GM10248 (cell line): ENCODE measurements at regions of chr3 and their contacts with region 1.

Region 1: GRCh38 chr3:29668728-29669127 is 387.9 kb downstream of the RBMS3 start:
- DNase-seq: no peak
- CTCF ChIP-seq: peak; percentile 9

Region 2: GRCh38 chr3:29679944-29680343 is 11.2 kb after region 1 on chr3:
- CTCF ChIA-PET with region 1: interaction called, 10 read pairs
- POLR2A ChIA-PET with region 1: no interaction called
- DNase-seq: no peak
- CTCF ChIP-seq: no peak

Region 3: GRCh38 chr3:29775340-29775739 is 106.6 kb after region 1 on chr3:
- CTCF ChIA-PET with region 1: no interaction called
- POLR2A ChIA-PET with region 1: no interaction called
- DNase-seq: no peak
- CTCF ChIP-seq: no peak